Activated CD8-positive, alpha-beta memory T cell treated with anti-CD3 and anti-CD28 coated beads, Interleukin-2, amount 10 ng/mL, durations not matched to agents 7 days and 5 days (primary cell): ENCODE measurements at regions of chr11 and their contacts with region 1.

Region 1: DNA sequence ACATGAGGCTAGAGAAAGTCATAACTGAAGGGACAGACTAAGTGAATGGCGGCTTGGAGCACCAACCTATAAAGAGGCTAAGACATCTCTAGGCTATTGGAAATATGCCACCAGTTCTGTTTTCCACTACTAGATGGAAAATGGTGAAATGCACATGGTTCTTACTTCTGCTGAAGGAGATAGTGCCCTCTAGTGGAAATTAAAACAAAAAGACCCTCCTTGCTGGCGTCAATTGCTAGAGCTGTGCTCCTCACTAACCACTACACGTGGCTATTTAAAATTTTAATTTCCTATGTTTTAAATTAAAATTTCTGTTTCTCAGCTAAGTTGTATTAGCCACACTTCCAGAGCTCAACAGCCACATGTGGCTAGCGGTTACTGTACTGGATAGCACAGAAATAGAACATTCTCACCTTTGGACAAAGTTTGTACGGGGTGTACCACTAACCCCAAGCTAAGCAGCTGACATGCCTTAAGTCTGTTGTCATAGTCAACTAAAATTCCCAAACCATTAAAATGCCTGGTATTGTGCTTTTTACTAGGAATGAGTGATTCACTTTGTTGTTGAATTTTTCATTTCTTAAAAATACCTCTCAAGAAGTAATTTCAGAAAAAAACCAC is 34.1 kb upstream of the CALCA start:
- DNase-seq: no peak
- ATAC-seq: peak; percentile 64
- H3K4me3 Mint-ChIP-seq: no peak overlapping the region
- H3K27ac Mint-ChIP-seq: no peak overlapping the region
- H3K4me1 Mint-ChIP-seq: no peaks in the 10 kb centered on the region
- H3K27me3 Mint-ChIP-seq: peaks cover 53% of the 10 kb centered on the region

Region 2: GRCh38 chr11:14956111-14956510 is 50.1 kb before region 1 on chr11:
- CTCF ChIA-PET with region 1: no interaction called
- DNase-seq: no peak
- ATAC-seq: no peak
- H3K4me3 Mint-ChIP-seq: no peak overlapping the region
- H3K27ac Mint-ChIP-seq: no peak overlapping the region
- H3K4me1 Mint-ChIP-seq: no peaks in the 10 kb centered on the region
- H3K27me3 Mint-ChIP-seq: peaks cover 5% of the 10 kb centered on the region

Region 3: DNA sequence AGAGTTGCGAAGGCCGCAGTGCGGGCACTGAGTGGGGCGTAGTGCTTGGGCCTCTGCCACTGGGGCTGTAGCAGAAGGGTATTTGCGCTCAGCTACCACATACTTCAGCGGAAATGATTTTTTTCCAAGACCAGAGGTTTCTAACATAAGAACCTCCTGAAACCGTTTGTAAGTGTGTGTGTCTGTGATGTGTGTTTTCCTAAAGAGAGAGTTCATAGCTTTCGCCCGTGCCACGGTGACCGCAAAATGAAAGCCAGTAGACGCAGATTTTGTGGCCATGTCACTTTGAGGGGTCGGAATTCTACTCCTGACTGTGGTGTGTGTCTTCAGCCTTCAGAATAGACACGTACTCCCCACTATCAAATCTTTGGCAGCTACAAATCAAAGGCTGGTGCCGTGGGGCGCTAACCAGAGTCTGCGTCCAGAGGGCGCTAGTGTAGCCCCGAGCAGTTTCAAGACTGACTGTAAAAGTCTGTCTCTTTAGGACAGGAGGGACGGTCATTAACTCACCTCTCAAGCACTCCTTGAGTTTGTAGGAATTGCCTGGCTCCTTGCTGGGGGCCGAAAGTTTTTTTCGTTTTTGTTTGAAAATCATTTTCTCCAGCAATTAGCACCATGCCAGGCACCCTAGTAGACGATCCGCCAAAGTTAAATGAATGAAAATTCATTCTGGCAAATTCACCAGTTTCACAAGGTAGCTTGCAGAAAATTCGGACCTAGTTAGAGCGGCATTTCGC is 31.6 kb before region 1 on chr11:
- CTCF ChIA-PET with region 1: interaction called, 27 read pairs
- DNase-seq: peak; percentile 77
- ATAC-seq: peak; percentile 68
- H3K4me3 Mint-ChIP-seq: peak overlapping the region; percentile 50
- H3K27ac Mint-ChIP-seq: no peak overlapping the region
- H3K4me1 Mint-ChIP-seq: peaks cover 28% of the 10 kb centered on the region
- H3K27me3 Mint-ChIP-seq: peaks cover 77% of the 10 kb centered on the region

Region 4: DNA sequence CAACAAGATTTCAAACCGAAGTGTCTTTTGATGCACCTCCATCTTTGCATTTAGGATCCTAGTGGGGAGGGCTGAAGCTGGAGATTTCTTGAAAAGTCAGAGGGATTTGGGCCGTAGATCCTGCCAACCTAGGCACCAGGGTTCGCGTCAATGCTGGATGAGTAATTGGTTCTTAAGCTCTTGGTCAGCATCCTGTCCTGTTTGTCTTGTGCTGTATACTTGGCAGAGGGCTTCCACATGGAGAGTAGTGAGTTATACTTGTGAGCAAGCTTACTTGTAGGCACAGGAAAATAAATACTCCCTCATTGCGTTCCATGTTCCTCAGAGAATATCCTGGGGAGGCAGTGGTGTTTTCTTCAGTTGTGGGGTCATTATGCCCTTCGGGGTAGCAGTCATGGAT is 121.1 kb after region 1 on chr11:
- CTCF ChIA-PET with region 1: no interaction called
- DNase-seq: no peak
- ATAC-seq: no peak
- H3K4me3 Mint-ChIP-seq: no peak overlapping the region
- H3K27ac Mint-ChIP-seq: no peak overlapping the region
- H3K4me1 Mint-ChIP-seq: no peaks in the 10 kb centered on the region
- H3K27me3 Mint-ChIP-seq: peaks cover 62% of the 10 kb centered on the region